Adrenal gland (tissue), 19 donors: ENCODE measurements at regions of chr18 and their contacts with region 1.

Region 1: GRCh38 chr18:62479574-62479973 is 43.3 kb upstream of the ZCCHC2 start:
- DNase-seq: no peak
- H3K4me3 ChIP-seq: no peak overlapping the region
- H3K27ac ChIP-seq: no peak overlapping the region
- H3K4me1 ChIP-seq: no peaks in the 10 kb centered on the region
- H3K27me3 ChIP-seq: no peaks in the 10 kb centered on the region
- CTCF ChIP-seq: no peak
- POLR2A ChIP-seq: no peak

Region 2: DNA sequence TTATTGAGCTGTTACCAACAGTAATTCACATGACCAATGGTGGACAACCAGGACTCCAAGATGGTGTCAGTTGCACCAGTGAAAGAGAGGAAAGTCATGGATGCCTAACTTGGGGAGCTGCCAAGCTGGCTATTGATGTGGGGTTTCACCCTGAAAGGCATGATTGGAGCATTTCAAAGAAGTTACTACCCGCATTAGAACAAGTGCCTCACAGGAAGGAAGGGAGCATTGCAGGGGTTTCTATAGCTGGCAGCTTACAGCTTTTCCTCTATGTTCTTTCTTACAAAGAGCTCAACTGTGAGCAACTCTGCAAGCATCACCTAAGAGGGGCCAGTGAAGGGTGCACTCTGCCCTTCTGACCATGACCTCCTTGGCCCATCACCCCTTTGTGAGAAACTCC is 61.3 kb before region 1 on chr18:
- intact Hi-C with region 1: loop called in 1 of 2 experiments (anchors 10 kb)
- DNase-seq: no peak
- H3K4me3 ChIP-seq: no peak overlapping the region
- H3K27ac ChIP-seq: no peak overlapping the region
- H3K4me1 ChIP-seq: no peaks in the 10 kb centered on the region
- H3K27me3 ChIP-seq: no peaks in the 10 kb centered on the region
- CTCF ChIP-seq: no peak
- POLR2A ChIP-seq: no peak

Region 3: GRCh38 chr18:62545098-62545497 is 65.5 kb after region 1 on chr18:
- intact Hi-C with region 1: no loop called
- DNase-seq: peak in 4 of 7 donors; percentile 13 to 52 (median 36)
- H3K4me3 ChIP-seq: no peak overlapping the region
- H3K27ac ChIP-seq: no peak overlapping the region
- H3K4me1 ChIP-seq: no peaks in the 10 kb centered on the region
- H3K27me3 ChIP-seq: no peaks in the 10 kb centered on the region
- CTCF ChIP-seq: no peak
- POLR2A ChIP-seq: no peak